Caco-2 (cell line): ENCODE measurements at regions of chr16 and their contacts with region 1.

Region 1: DNA sequence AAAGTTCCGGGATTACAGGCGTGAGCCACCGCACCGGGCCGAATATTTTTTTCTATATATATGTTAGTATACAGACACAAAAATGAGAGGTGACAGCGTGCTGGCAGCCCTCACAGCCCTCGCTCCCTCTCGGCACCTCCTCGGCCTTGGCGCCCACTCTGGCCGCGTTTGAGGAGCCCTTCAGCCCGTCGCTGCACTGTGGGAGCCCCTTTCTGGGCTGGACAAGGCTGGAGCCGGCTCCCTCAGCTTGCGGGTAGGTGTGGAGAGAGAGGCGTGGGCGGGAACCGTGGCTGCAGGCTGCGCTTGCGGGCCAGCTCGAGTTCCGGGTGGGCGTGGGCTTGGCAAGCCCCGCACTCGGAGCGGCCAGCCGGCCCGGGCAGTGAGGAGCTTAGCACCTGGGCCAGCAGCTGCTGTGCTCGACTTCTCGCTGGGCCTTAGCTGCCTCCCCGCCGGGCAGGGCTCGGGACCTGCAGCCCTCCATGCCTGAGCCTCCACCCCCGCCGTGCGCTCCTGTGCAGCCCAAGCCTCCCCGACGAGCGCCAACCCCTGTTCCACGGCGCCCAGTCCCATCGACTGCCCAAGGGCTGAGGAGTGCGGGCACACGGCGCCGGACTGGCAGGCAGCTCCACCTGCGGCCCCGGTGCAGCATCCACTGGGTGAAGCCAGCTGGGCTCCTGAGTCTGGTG is 1.9 kb upstream of the DPEP3 start:
- DNase-seq: no peak
- H3K4me3 ChIP-seq: no peak overlapping the region
- H3K4me3 Mint-ChIP-seq: no peak overlapping the region
- H3K27ac Mint-ChIP-seq: no peak overlapping the region
- H3K4me1 ChIP-seq: peaks cover 4% of the 10 kb centered on the region; the same call in 1 of the 2 replicates
- H3K4me1 Mint-ChIP-seq: peaks cover 5% of the 10 kb centered on the region
- H3K27me3 ChIP-seq: no peaks in the 10 kb centered on the region
- H3K27me3 Mint-ChIP-seq: no peaks in the 10 kb centered on the region
- CTCF ChIP-seq: no peak

Region 2: GRCh38 chr16:68040507-68041288 is 58.5 kb after region 1 on chr16:
- CTCF ChIA-PET with region 1: no interaction called
- POLR2A ChIA-PET with region 1: no interaction called
- intact Hi-C with region 1: no loop called
- DNase-seq: peak; percentile 86 to 92
- H3K4me3 ChIP-seq: no peak overlapping the region
- H3K4me3 Mint-ChIP-seq: no peak overlapping the region
- H3K27ac Mint-ChIP-seq: no peak overlapping the region
- H3K4me1 ChIP-seq: no peaks in the 10 kb centered on the region
- H3K4me1 Mint-ChIP-seq: no peaks in the 10 kb centered on the region
- H3K27me3 ChIP-seq: no peaks in the 10 kb centered on the region
- H3K27me3 Mint-ChIP-seq: no peaks in the 10 kb centered on the region
- CTCF ChIP-seq: peak; percentile 92 to 95

Region 3: GRCh38 chr16:68085259-68086071 is 103.3 kb after region 1 on chr16 and contains the start of gene NFATC3:
- CTCF ChIA-PET with region 1: no interaction called
- POLR2A ChIA-PET with region 1: interaction called, 10 read pairs
- intact Hi-C with region 1: no loop called
- DNase-seq: peak; percentile 99
- H3K4me3 ChIP-seq: peak within 1 kb of the TSS; percentile 87
- H3K4me3 Mint-ChIP-seq: peak within 1 kb of the TSS; percentile 71
- H3K27ac Mint-ChIP-seq: peak within 1 kb of the TSS; percentile 83
- H3K4me1 ChIP-seq: peaks cover 28% of the 10 kb centered on the region
- H3K4me1 Mint-ChIP-seq: peaks cover 38% of the 10 kb centered on the region
- H3K27me3 ChIP-seq: no peaks in the 10 kb centered on the region
- H3K27me3 Mint-ChIP-seq: no peaks in the 10 kb centered on the region
- CTCF ChIP-seq: no peak
- total RNA-seq, gene NFATC3: 40.0 and 43.9 TPM in 2 replicates